Activated CD4-positive, alpha-beta T cell treated with anti-CD3 and anti-CD28 coated beads for 36 hours (primary cell): ENCODE measurements at regions of chr18 and their contacts with region 1.

Region 1: DNA sequence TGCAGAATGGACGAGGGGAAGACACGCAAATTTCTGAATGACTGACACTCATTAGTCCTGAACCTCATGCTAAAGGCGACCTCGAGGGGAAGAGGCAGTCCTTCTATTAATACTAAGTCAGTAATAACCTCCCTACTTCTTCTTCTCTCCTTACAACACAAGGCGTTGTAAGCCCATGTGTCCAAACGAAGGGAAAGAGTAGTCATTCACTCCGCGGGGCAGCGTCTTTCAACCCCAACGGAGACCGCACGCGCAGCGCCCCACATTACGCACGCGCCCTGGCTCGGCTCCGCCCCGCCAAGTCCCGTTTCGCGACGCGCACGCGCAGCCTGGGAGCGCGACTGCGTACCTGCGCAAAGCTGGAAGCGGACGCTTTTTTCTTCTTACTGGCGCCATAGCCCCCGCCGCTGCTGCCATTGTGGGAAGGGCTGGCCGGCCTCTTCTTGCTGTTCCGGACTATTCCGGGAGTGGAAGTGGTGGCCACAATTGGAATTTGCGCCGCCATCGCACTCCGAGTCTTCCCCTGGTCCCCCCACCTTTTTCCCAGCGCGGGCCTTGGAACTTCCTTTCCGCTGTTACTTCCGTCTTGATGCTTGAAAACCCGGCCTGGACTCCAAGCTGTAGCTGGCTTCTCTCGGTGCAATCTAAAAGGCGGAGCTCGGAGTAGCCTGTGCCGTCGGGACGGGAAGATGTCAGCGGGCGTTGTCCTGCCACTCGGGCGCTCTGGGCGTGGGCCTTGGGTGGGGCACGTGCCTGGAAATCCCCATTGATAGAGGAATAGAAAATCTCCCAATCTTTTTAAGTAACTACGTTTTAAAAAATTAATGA is at the start of gene INO80C:
- DNase-seq: peak; percentile 96
- ATAC-seq: peak; percentile 95
- H3K4me3 Mint-ChIP-seq: peak within 1 kb of the TSS; percentile 85
- H3K27ac Mint-ChIP-seq: peak within 1 kb of the TSS; percentile 97
- H3K4me1 Mint-ChIP-seq: peaks cover 33% of the 10 kb centered on the region
- H3K27me3 Mint-ChIP-seq: no peaks in the 10 kb centered on the region
- total RNA-seq, gene INO80C: 30.8 to 37.4 TPM

Region 2: DNA sequence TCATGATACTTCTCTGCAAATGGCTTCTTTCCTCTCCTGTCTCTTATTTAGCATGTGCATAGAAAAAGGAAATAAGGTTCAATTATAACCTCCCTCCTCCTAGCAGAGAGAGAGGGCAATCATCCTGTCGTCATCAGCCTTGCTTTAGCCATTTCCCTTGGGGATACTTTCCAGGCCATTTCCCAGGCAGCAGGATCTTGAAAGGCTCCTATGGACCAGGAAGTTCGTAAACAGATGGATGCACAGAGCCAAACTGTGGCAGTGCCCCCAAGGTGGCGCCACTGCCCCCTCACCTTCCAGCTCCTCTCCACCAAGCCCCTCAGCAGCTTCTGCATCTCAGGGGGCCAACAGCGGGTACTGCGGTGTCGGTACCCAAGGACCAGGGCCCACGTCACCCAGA is 630.1 kb before region 1 on chr18:
- CTCF ChIA-PET with region 1: no interaction called
- POLR2A ChIA-PET with region 1: no interaction called
- intact Hi-C with region 1: loop called in 1 of 2 experiments (anchors 5 kb)
- DNase-seq: peak; percentile 34
- ATAC-seq: no peak
- H3K4me3 Mint-ChIP-seq: no peak overlapping the region
- H3K27ac Mint-ChIP-seq: peak overlapping the region; percentile 67
- H3K4me1 Mint-ChIP-seq: peaks cover 47% of the 10 kb centered on the region
- H3K27me3 Mint-ChIP-seq: peaks cover 3% of the 10 kb centered on the region

Region 3: DNA sequence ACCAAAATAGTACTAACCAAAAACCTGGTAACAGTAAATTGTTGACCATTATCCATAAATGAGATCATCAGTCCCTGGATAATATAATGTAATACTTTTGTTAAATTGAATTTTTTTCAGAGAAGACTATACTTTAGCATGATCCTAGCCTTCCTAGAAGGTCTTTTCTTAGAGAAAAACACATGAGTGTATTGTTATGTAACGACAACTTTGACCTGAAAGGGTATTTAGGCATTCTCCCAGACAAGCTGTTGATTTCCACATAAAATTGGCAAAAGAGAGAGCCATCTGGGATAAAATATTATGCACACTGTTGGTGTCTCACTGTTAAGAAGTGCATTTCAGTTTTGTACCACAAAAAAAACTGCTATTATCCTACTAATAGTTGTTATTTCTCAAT is 576.4 kb before region 1 on chr18:
- CTCF ChIA-PET with region 1: no interaction called
- POLR2A ChIA-PET with region 1: no interaction called
- intact Hi-C with region 1: no loop called
- DNase-seq: no peak
- ATAC-seq: no peak
- H3K4me3 Mint-ChIP-seq: no peak overlapping the region
- H3K27ac Mint-ChIP-seq: no peak overlapping the region
- H3K4me1 Mint-ChIP-seq: no peaks in the 10 kb centered on the region
- H3K27me3 Mint-ChIP-seq: peaks cover 5% of the 10 kb centered on the region

Region 4: DNA sequence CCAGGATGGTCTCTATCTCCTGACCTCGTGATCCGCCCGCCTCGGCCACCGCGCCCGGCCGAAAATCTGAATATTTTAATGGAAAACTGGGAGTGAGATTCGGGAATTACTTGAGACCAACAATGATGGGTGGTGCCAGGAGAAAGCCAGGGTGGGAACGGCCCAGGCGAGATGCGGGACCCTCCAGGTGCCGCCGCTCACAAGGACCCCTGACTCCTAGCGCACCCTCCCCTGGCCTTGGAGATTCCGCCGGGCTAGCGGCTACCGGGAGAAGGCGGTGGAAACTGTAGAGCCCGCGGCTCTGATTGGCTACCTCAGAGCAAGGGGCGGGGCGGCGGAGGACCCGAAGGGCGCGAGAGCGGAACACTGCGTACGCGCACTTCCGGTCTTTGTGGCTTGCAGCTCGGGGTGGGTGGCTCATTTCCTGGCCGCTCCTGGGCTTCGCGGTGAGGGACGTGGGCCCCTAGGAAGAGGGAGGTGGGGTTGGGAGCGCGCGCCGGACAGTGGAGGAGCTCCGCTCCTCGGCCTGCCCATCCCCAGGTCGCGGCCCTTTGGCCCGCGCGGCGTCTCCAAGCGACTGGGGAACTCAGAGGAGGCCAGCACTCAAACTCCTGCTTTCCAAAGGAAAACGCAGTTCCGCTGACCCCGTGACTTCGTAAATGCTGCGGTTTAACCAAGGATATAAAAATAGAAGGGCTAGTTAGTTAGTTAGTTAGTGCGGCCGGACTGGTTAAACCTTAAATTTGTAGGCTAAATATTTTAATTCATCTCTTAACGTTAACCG is 256.7 kb before region 1 on chr18 and contains the start of gene ZNF397:
- CTCF ChIA-PET with region 1: no interaction called
- POLR2A ChIA-PET with region 1: no interaction called
- intact Hi-C with region 1: loop called (anchors 1 to 10 kb)
- DNase-seq: peak; percentile 98
- ATAC-seq: peak; percentile 98
- H3K4me3 Mint-ChIP-seq: peak within 1 kb of the TSS; percentile 97
- H3K27ac Mint-ChIP-seq: peak within 1 kb of the TSS; percentile 97
- H3K4me1 Mint-ChIP-seq: peaks cover 31% of the 10 kb centered on the region
- H3K27me3 Mint-ChIP-seq: no peaks in the 10 kb centered on the region
- total RNA-seq, gene ZNF397: 21.3 to 21.9 TPM

Region 5: DNA sequence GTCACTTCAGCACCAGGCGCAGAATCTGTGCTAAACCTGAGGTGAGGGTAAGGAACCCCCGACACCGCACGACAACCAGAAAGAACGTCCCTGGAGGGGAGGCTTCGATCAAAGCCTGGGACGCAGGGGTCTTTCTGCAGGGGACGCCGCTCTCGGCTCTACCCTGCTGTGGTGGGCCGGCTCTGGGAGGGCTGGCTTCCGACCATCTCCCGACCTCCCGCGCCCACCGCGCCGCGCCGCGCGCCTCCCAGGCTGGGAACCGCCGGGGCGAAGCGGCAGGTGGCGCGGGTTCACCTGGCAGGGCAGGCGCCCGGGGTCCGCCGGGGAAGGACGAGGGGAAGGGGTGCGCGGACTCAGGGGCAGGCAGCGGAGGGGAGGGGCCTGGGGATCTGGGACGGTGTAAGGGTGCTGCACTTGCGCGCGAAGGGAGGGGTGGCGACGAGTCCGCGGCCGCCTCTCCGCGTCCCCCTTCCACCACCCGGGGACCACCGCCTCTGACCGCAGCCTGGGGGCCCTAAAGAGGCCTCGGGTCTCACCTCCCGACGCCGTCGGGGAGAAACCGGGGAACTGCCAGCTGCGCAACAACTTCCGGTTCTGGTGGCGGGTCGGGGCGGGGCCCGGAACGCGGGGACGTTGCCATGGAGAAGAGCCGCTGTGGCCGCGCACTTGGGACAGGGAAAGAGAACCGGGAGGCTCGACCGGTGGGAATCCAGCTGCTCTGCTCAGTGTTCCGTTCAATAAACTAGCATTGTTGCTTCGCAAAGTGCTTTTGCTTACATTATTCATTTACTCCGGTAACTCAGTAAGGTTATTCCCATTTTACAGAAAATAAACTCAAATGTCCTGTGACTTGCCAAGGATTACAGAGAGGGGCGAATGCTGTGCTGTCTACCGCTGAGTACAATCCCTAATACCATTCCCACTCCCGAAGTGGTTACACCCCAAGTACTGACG is 120.6 kb before region 1 on chr18 and contains the start of gene ZNF396:
- CTCF ChIA-PET with region 1: no interaction called
- POLR2A ChIA-PET with region 1: no interaction called
- intact Hi-C with region 1: loop called in 1 of 2 experiments (anchors 1 kb)
- DNase-seq: peak; percentile 81
- ATAC-seq: peak; percentile 79
- H3K4me3 Mint-ChIP-seq: peak within 1 kb of the TSS; percentile 71
- H3K27ac Mint-ChIP-seq: peak within 1 kb of the TSS; percentile 19
- H3K4me1 Mint-ChIP-seq: peaks cover 10% of the 10 kb centered on the region
- H3K27me3 Mint-ChIP-seq: no peaks in the 10 kb centered on the region
- total RNA-seq, gene ZNF396: 0.47 to 1.1 TPM

Region 6: GRCh38 chr18:35580701-35581539 is 83.3 kb after region 1 on chr18:
- CTCF ChIA-PET with region 1: no interaction called
- POLR2A ChIA-PET with region 1: interaction called, 5 read pairs
- intact Hi-C with region 1: loop called (anchors 1 to 5 kb)
- DNase-seq: peak; percentile 72
- ATAC-seq: peak; percentile 61
- H3K4me3 Mint-ChIP-seq: peak overlapping the region; percentile 69
- H3K27ac Mint-ChIP-seq: peak overlapping the region; percentile 37
- H3K4me1 Mint-ChIP-seq: peaks cover 35% of the 10 kb centered on the region
- H3K27me3 Mint-ChIP-seq: peaks cover 17% of the 10 kb centered on the region

Region 7: GRCh38 chr18:36067055-36067957 is 569.7 kb after region 1 on chr18 and contains the start of gene RPRD1A:
- CTCF ChIA-PET with region 1: no interaction called
- POLR2A ChIA-PET with region 1: no interaction called
- intact Hi-C with region 1: loop called (anchors 1 to 10 kb)
- DNase-seq: peak; percentile 99
- ATAC-seq: peak; percentile 96
- H3K4me3 Mint-ChIP-seq: peak within 1 kb of the TSS; percentile 78
- H3K27ac Mint-ChIP-seq: peak within 1 kb of the TSS; percentile 89
- H3K4me1 Mint-ChIP-seq: peaks cover 29% of the 10 kb centered on the region
- H3K27me3 Mint-ChIP-seq: peaks cover 3% of the 10 kb centered on the region
- total RNA-seq, gene RPRD1A: 27.9 to 32.1 TPM